Posterior cingulate gyrus (tissue), 11 donors: ENCODE measurements at regions of chr15 and their contacts with region 1.

Region 1: GRCh38 chr15:45402162-45402954 is 24.0 kb upstream of the GATM start:
- DNase-seq: peak; percentile 96 to 100 (median 98)

Region 2: GRCh38 chr15:45166834-45167630 is 235.3 kb before region 1 on chr15:
- intact Hi-C with region 1: loop called (anchors 2 kb)
- DNase-seq: peak; percentile 70 to 97 (median 80)

Region 3: GRCh38 chr15:45200001-45200798 is 202.2 kb before region 1 on chr15:
- intact Hi-C with region 1: loop called (anchors 5 kb)
- DNase-seq: peak; percentile 92 to 99 (median 96)

Region 4: GRCh38 chr15:45307230-45307924 is 95.0 kb before region 1 on chr15:
- intact Hi-C with region 1: loop called (anchors 1 kb)
- DNase-seq: no peak

Region 5: GRCh38 chr15:45587095-45587860 is 184.9 kb after region 1 on chr15 and contains the start of gene BLOC1S6:
- intact Hi-C with region 1: loop called (anchors 5 kb)
- DNase-seq: peak; percentile 84 to 98 (median 92)